PC-9 (cell line): ENCODE measurements at regions of chr4 and their contacts with region 1.

Region 1: GRCh38 chr4:40056716-40057585 is at the start of gene N4BP2:
- DNase-seq: peak; percentile 65 to 79
- H3K4me3 ChIP-seq: peak within 1 kb of the TSS; percentile 93
- H3K27ac ChIP-seq: peak within 1 kb of the TSS; percentile 88
- H3K4me1 ChIP-seq: peaks cover 26% of the 10 kb centered on the region
- H3K27me3 ChIP-seq: no peaks in the 10 kb centered on the region
- CTCF ChIP-seq: peak; percentile 55; the same call in 1 of the 2 replicates
- total RNA-seq, gene N4BP2: 6.5 and 7.8 TPM in 2 replicates

Region 2: DNA sequence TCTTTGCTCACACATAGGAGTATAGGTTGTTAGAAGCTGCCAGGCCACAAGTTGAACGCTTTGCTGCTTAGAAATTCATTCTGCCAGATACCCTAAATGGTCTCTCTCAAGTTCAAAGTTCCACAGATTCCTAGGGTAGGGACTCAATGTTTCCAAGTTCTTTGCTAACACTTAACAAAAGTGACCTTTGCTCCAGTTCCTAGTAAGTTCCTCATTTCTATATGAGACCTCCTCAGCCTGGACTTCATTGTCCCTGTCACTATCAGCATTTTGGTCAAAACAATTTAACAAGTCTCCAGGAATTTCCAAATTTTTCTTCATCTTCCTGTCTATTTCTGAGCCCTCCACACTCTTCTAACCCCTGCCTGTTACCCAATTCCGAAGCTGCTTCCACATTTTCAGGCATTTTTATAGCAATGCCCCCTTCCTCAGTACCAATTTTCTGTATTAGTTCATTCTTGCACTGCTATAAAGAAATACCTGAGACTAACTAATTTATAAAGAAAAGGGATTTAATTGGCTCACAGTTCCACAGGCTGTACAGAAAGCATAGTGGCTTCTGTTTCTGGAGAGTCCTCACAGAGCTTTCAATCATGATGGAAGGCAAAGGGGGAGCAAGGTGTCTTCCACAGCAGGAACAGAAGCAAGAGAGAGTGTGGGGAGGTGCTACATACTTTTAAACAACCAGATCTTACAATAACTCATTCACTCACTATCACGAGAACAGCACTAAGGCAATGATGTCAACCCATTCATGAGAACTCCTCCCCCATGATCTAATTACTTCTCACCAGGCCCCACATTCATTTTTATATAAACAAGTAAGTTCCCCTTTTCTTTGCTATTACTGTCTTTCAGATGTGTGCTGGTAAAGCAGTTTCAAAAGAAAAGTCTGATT is 1240.8 kb before region 1 on chr4:
- CTCF ChIA-PET with region 1: no interaction called
- POLR2A ChIA-PET with region 1: no interaction called
- intact Hi-C with region 1: no loop called
- DNase-seq: no peak
- H3K4me3 ChIP-seq: no peak overlapping the region
- H3K27ac ChIP-seq: no peak overlapping the region
- H3K4me1 ChIP-seq: peaks cover 33% of the 10 kb centered on the region
- H3K27me3 ChIP-seq: no peaks in the 10 kb centered on the region
- CTCF ChIP-seq: no peak

Region 3: DNA sequence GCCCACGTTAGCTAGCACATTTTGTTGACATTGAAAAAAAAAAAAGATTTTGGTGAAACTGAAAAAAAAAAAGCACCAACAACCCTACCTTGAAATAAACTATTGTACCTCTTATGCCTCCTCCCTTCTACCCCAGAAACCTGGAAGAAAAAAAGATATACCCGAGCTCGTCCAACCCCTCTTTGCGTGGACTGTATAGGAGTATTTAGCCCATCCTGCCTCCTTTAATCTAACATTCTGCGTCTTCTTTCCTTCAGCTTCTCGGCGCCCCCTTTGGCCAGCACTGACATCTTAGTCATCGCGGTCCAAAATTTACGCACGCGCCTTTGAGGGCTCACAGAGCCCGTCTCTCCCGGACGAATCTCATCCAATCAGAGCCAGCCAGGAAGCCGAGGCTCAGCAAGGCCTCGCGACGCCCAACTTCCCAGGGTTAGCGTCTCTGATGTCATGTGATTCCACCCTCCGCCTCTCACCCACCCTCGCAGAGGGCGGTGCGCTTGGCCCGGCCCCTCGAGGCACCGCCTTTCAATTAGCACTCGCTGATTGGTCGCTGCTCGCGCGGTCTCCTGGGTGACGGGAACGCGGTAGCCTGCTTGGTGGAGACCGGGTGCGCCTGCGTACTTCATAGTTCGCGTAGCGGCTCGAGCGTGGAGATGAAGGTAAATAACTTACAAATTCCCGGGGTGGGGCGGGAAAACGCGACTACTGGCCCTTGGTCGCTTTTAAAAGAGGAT is 874.9 kb before region 1 on chr4 and contains the start of gene WDR19:
- CTCF ChIA-PET with region 1: no interaction called
- POLR2A ChIA-PET with region 1: interaction called, 11 read pairs
- intact Hi-C with region 1: no loop called
- DNase-seq: peak; percentile 97 to 99
- H3K4me3 ChIP-seq: peak within 1 kb of the TSS; percentile 74
- H3K27ac ChIP-seq: peak within 1 kb of the TSS; percentile 36; the same call in 1 of the 2 replicates
- H3K4me1 ChIP-seq: peaks cover 15% of the 10 kb centered on the region
- H3K27me3 ChIP-seq: no peaks in the 10 kb centered on the region
- CTCF ChIP-seq: peak; percentile 62; the same call in 1 of the 2 replicates
- total RNA-seq, gene WDR19: 26.1 and 33.2 TPM in 2 replicates

Region 4: DNA sequence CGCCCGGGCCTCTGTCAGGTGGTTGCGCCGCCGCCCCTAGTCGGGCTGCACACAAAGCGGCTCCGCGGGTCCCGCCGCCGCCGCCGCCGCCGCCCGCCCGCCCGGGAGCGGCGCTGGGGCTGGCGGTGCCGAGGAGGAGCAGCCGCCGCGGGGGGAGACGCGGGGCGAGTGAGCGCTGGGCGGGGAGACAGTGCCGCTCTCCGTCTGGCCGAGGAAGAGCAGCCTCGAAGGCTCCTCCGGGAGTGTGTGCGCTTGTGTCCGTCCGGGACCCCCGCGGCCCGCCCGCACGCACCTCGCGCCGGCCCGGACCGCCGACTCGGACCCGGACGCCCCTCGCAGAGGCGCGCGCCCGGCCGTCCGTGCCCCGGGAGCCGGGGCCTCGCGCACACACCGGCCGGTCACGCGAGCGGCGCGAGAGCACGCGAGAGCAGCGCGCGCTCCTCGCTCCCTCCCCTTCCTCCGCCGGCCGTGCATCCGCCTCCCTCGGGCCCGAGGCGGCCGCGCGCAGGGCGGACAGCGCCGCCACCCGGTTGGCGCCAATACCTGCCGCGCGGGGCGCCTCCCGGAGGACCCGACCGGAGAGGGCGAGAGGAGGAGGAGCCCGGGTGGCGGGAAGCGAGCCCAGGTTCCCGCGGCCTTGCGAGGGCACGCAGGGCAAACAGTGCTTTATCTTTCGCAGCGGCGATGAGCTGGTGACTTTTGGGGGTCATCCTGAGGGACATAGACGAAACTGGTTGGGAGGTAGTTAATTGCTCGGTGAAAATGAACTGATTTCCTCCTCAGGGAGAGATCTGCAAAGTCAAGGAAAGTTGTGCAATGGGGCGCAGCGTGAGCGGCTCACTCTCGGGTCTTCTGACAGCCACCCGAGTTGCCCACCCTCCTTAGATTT is 79.2 kb before region 1 on chr4 and contains the start of gene PDS5A:
- CTCF ChIA-PET with region 1: interaction called, 4 read pairs
- POLR2A ChIA-PET with region 1: no interaction called
- intact Hi-C with region 1: loop called (anchors 1 kb)
- DNase-seq: peak; percentile 72 to 93
- H3K4me3 ChIP-seq: peak within 1 kb of the TSS; percentile 93
- H3K27ac ChIP-seq: peak within 1 kb of the TSS; percentile 72
- H3K4me1 ChIP-seq: peaks cover 18% of the 10 kb centered on the region
- H3K27me3 ChIP-seq: no peaks in the 10 kb centered on the region
- CTCF ChIP-seq: peak; percentile 73
- total RNA-seq, gene PDS5A: 78.9 and 86.4 TPM in 2 replicates

Region 5: DNA sequence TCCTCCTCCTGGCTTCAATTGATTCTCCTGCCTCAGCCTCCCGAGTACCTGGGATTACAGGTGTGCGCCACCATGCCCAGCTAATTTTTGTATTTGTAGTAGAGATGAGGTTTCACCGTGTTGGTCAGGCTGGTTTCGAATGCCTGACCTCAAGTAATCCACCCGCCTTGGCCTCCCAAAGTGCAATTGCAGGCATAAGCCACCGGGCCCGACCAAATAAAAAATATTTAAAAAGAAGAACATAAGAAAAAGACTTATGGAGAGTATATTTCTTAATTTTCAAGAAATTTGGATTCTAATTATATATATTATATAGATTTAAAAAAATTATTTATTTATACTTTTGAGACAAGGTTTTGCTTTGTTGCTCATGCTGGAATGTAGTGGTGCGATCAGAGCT is 29.5 kb after region 1 on chr4:
- CTCF ChIA-PET with region 1: no interaction called
- POLR2A ChIA-PET with region 1: no interaction called
- intact Hi-C with region 1: no loop called
- DNase-seq: no peak
- H3K4me3 ChIP-seq: no peak overlapping the region
- H3K27ac ChIP-seq: no peak overlapping the region
- H3K4me1 ChIP-seq: no peaks in the 10 kb centered on the region
- H3K27me3 ChIP-seq: no peaks in the 10 kb centered on the region
- CTCF ChIP-seq: no peak

Region 6: DNA sequence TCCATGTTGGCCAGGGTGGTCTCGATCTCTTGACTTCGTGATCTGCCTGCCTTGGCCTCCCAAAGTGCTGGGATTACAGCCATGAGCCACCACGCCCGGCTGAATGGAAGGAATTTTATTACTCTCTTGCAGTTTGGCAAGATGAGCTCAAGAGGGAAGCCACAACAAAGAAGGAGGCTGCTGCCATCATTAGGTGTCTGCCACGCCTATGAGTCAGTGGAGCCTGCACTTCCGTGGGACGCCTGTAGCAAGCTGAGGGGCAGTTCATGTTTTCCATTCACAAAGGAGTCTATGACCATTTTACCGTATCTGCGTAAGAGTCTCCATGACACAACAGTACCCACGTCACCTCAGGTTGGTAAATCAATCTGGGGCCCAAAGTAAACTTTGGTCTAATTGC is 227.0 kb after region 1 on chr4:
- CTCF ChIA-PET with region 1: interaction called, 13 read pairs
- POLR2A ChIA-PET with region 1: interaction called, 6 read pairs
- intact Hi-C with region 1: no loop called
- DNase-seq: peak in 1 of 2 experiments; percentile 22
- H3K4me3 ChIP-seq: no peak overlapping the region
- H3K27ac ChIP-seq: no peak overlapping the region
- H3K4me1 ChIP-seq: no peaks in the 10 kb centered on the region
- H3K27me3 ChIP-seq: no peaks in the 10 kb centered on the region
- CTCF ChIP-seq: no peak

Region 7: GRCh38 chr4:40576631-40577480 is 519.9 kb after region 1 on chr4:
- CTCF ChIA-PET with region 1: no interaction called
- POLR2A ChIA-PET with region 1: interaction called, 12 read pairs
- intact Hi-C with region 1: loop called (anchors 10 kb)
- DNase-seq: peak; percentile 76 to 97
- H3K4me3 ChIP-seq: peak overlapping the region; percentile 28; the same call in 1 of the 2 replicates
- H3K27ac ChIP-seq: peak overlapping the region; percentile 81
- H3K4me1 ChIP-seq: peaks cover 49% of the 10 kb centered on the region
- H3K27me3 ChIP-seq: no peaks in the 10 kb centered on the region
- CTCF ChIP-seq: no peak

Region 8: DNA sequence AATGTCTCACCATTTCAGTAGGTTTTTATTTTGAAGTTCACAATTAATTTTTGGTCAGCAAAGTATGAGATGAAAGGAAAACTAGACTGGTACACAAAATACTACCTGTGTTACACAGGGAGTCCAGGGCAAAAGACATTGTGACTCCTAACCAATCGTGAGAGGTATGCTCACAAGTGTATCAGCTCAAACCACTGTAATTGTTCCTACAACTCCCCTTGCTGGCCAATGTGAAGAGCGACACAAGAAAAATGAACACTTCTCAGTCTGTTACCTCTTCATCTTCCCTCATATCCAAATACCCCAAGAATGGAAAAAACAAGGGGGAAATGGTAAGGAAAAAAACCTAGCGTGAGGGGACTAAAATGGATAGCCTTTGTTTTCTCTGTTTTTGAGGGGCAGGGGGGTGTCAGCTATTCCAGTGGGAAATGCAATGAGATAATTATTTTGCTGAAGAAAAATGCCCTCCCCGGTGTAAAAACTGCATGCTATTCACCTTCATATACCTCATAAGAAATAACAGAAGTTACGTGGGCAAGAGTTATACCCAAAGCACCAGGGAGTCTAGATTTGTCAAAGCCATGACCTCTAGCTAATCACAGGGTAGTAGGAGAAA is 662.2 kb after region 1 on chr4:
- CTCF ChIA-PET with region 1: no interaction called
- POLR2A ChIA-PET with region 1: no interaction called
- intact Hi-C with region 1: loop called (anchors 5 kb)
- DNase-seq: peak; percentile 28 to 83
- H3K4me3 ChIP-seq: 0 out of 2 replicates have a peak overlapping the region, but pooled peaks have one; percentile 8
- H3K27ac ChIP-seq: peak overlapping the region; percentile 66
- H3K4me1 ChIP-seq: peaks cover 59% of the 10 kb centered on the region
- H3K27me3 ChIP-seq: no peaks in the 10 kb centered on the region
- CTCF ChIP-seq: peak; percentile 76